Activated naive CD4-positive, alpha-beta T cell treated with anti-CD3 and anti-CD28 coated beads for 36 hours (primary cell): ENCODE measurements at regions of chr18 and their contacts with region 1.

Region 1: DNA sequence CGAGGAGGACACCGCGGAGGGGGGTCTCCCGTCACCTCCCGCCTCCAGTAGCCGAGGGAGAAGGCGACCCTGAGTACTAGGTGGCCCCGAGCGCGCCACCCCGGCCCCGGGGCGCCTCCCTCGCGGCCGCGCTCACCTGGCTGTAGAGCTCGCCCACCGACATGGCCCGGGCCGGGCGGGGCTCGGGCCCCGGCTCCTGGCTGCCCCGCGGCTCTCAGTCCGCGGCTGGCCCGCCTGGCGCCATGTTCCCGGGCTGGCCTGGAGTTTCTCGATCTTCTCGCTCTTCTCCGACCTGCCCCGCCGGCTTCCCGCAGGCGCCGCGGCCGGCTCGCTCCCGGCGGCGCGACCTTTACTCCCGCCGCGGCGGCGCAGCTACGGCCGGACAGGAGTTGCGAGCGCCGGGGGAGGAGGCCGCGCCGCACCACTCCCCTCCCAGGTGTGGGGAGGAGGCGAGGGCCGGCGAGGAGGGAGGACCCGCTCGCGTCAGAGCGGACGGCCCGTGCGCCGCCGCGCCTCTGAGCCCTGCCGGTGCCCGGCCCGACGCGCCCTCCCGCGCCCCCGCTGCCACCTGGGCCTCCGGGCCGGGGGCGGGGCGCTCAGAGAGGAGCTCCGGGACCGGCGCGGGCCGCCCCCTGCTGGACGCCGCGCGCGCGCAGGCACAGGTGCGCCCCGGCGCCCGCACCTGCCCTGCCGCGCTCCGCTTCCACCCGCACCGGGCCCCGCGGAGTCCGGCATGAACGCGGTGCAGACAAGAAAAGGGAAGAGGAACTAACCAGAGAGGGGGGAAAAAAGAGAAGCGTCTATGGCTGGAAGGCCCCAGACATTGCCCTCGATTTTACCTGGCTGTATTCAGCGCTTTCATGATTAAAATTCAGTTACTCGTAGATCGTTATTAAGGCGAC is at the start of gene MYO5B:
- DNase-seq: peak; percentile 53
- H3K4me3 Mint-ChIP-seq: peak within 1 kb of the TSS; percentile 57
- H3K27ac Mint-ChIP-seq: no peak within 1 kb of the TSS
- H3K4me1 Mint-ChIP-seq: peaks cover 13% of the 10 kb centered on the region
- H3K27me3 Mint-ChIP-seq: peaks cover 51% of the 10 kb centered on the region
- total RNA-seq, gene MYO5B: 0.02 to 0.12 TPM

Region 2: DNA sequence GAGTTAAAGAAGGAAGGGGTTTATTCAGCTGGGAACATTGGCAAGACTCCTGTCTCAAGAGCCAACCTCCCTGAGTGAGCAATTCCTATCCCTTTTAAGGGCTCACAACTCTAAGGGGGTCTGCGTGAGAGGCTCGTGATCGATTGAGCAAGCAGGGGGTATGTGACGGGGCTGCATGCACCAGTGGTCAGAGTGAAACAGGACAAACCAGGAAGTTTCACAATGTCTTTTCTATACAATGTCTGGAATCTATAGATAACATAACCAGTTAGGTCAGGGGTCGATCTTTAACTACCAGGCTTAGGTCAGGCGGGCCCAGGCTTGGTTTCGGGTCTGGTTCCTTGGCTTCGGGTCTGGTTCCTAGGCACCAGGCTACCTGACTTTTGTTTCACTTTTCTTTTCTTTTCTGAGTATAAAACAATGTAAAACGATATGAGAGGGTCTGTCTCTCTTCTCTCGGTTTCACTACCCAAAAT is 663.2 kb before region 1 on chr18:
- CTCF ChIA-PET with region 1: no interaction called
- intact Hi-C with region 1: no loop called
- DNase-seq: no peak
- H3K4me3 Mint-ChIP-seq: no peak overlapping the region
- H3K27ac Mint-ChIP-seq: no peak overlapping the region
- H3K4me1 Mint-ChIP-seq: no peaks in the 10 kb centered on the region
- H3K27me3 Mint-ChIP-seq: peaks cover 9% of the 10 kb centered on the region

Region 3: DNA sequence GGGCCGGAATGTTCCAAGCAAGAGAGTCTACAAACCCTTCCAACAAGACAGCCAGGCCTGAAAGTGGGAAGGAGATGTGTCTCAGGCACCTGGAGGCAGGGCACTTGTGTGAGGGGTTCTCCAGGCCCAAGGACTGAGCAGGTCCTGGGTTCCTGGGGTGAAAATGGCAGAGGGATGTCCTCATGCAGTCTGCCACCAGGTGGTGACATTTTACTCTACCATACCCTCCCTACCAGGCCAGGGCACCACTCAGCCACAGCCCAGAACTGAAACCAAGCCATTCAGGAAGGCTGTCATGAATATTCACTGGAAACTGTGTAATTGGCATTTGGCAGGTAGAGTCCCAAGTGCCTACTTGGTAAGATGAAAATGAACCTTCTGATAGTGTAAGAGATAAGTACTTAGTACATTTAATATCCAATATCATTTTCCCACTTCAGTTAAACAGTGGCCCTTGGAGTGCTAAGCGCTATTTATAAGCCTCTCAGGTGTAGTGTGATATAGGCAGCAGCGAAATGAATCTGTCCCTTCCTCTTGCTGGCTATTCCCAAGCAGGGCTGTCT is 185.0 kb before region 1 on chr18:
- CTCF ChIA-PET with region 1: interaction called, 5 read pairs
- intact Hi-C with region 1: loop called (anchors 1 kb)
- DNase-seq: peak; percentile 67
- H3K4me3 Mint-ChIP-seq: no peak overlapping the region
- H3K27ac Mint-ChIP-seq: no peak overlapping the region
- H3K4me1 Mint-ChIP-seq: no peaks in the 10 kb centered on the region
- H3K27me3 Mint-ChIP-seq: no peaks in the 10 kb centered on the region

Region 4: GRCh38 chr18:51266773-51267172 is 1071.9 kb after region 1 on chr18:
- CTCF ChIA-PET with region 1: no interaction called
- intact Hi-C with region 1: no loop called
- DNase-seq: no peak
- H3K4me3 Mint-ChIP-seq: no peak overlapping the region
- H3K27ac Mint-ChIP-seq: no peak overlapping the region
- H3K4me1 Mint-ChIP-seq: no peaks in the 10 kb centered on the region
- H3K27me3 Mint-ChIP-seq: peaks cover 4% of the 10 kb centered on the region

Region 5: DNA sequence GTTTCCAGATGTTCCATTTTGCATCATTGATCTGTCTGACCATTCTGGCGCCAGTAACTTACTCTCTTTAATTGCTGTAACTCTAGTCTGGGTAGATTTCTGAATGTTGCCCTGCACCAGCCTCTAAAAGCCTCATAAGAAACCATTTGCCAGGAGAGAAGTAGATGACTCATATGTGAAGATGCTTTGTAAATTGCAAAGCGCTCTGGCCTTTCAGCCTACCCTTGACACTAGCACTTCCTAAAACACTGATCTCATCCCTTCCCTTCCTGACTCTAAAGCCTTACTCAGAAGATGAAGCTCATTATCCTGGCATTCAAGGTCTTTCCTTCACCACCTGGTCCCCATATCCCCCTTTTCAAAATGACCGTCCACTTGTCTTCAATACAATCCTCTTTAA is 1195.8 kb after region 1 on chr18:
- CTCF ChIA-PET with region 1: no interaction called
- intact Hi-C with region 1: no loop called
- DNase-seq: no peak
- H3K4me3 Mint-ChIP-seq: no peak overlapping the region
- H3K27ac Mint-ChIP-seq: no peak overlapping the region
- H3K4me1 Mint-ChIP-seq: no peaks in the 10 kb centered on the region
- H3K27me3 Mint-ChIP-seq: peaks cover 13% of the 10 kb centered on the region